Posterior cingulate gyrus (tissue), 11 donors: ENCODE measurements at regions of chr14 and their contacts with region 1.

Region 1: DNA sequence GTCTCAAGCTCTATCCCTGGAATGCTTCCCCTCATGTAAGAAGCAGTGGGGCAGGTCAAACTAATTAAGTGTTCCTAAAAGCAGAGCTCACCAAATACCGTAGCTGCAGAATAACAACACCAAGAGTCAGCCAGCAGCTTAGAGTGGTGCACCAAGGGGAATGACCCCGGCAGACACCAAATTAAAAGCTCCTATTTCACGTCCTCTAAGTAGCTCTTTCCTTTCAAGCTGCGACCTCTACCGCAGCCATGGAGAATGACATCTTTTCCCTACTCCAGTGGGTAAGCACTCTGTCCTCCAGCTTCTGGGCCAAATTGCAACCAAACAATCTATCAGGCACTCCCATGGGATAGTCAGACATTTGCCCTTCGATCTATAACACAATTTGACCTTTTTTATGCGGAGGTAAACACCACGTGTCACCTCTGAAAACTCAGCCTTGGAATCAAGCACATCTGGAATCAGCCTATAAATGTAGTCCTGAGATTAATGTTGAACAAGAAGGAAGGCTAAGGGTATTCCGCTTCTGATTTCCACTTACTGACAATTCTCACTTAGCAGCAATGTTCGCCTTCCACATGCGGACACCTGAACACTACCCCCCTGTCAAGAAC is 67.6 kb upstream of the CDKN3 start:
- DNase-seq: peak in 4 of 10 donors; percentile 19 to 36 (median 26)

Region 2: GRCh38 chr14:54175298-54175942 is 153.8 kb before region 1 on chr14:
- intact Hi-C with region 1: loop called (anchors 5 kb)
- DNase-seq: peak in 7 of 10 donors; percentile 24 to 85 (median 66)

Region 3: GRCh38 chr14:54312140-54312801 is 16.9 kb before region 1 on chr14:
- intact Hi-C with region 1: no loop called
- DNase-seq: no peak